ENCODE measurements at regions of chr7 and their contacts with region 1.

Region 1: DNA sequence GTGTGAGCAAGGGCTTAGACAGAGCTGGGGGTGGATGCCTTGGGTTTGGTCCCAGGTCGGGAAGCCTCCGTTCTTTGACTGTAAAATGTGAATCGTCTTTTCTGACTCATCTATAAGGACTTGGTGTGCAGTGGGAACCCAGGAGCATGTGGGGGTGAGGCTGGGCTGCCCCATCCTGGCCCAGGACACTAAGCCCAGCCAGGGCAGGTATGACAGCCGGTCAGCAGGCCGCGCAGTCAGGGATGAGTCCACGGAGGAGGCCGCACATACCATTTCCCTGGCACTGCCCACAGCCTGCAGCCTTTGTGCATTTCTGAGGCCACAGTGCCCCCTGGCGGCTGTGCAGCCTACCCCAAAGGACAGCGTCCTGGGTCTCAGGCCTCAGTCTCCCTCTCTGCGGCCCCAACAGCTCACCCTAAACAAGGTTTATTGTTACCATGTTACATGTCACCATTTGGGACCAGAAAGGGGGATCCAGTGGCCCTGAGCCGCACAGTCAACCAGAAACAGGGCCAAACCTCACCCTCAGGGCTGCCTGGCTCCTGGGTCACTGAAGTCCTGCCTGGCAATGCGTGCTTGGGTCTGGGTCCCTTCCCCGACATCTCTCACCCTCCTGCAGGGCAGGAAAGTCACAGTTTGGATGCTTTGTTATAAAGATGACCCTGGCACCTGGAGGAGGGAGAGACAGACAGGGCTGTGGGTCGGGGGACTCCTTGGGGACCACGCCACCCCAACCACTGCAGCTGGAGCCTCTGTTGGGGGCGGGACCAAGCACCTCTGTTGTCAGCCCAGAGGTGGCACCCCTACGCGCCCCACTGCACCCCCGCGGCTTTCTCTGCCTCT is 14.4 kb upstream of the SH2B2 start:
- DNase-seq: peak; percentile 81 to 91
- ATAC-seq: peak; percentile 70 to 90
- H3K4me3 ChIP-seq: no peak overlapping the region
- H3K27ac ChIP-seq: peak overlapping the region; percentile 3 to 83; a peak in 4 of 6 replicates
- H3K4me1 ChIP-seq: peaks cover 29% of the 10 kb centered on the region
- CTCF ChIP-seq: peak; percentile 95
- EP300 ChIP-seq: no peak
- POLR2A ChIP-seq: no peak
- RAD21 ChIP-seq: peak; percentile 98

Region 2: DNA sequence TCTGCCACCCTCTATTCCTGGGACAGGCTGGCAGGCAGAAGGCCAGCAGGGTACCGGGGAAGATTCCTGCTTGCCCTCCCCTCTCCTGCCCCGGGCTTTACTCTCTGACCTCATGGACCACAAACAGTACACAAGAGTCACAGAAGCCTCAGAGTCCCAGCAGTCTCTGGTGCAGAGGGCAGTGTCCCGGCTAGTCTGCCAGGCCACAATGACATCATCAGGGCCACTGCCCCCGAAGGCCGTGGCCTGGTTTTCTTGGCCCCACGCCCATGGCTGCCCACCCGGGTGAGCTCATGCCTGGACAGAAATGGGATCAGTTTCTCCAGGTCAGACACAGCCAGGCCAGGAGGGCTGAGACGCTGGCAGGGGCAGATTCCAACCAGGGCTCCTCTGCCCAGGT is 735.1 kb before region 1 on chr7:
- CTCF ChIA-PET with region 1: interaction called, 106 read pairs
- POLR2A ChIA-PET with region 1: no interaction called
- DNase-seq: no peak
- ATAC-seq: no peak
- H3K4me3 ChIP-seq: no peak overlapping the region
- H3K27ac ChIP-seq: no peak overlapping the region
- H3K4me1 ChIP-seq: no peaks in the 10 kb centered on the region
- CTCF ChIP-seq: no peak
- EP300 ChIP-seq: no peak
- POLR2A ChIP-seq: no peak
- RAD21 ChIP-seq: no peak

Region 3: DNA sequence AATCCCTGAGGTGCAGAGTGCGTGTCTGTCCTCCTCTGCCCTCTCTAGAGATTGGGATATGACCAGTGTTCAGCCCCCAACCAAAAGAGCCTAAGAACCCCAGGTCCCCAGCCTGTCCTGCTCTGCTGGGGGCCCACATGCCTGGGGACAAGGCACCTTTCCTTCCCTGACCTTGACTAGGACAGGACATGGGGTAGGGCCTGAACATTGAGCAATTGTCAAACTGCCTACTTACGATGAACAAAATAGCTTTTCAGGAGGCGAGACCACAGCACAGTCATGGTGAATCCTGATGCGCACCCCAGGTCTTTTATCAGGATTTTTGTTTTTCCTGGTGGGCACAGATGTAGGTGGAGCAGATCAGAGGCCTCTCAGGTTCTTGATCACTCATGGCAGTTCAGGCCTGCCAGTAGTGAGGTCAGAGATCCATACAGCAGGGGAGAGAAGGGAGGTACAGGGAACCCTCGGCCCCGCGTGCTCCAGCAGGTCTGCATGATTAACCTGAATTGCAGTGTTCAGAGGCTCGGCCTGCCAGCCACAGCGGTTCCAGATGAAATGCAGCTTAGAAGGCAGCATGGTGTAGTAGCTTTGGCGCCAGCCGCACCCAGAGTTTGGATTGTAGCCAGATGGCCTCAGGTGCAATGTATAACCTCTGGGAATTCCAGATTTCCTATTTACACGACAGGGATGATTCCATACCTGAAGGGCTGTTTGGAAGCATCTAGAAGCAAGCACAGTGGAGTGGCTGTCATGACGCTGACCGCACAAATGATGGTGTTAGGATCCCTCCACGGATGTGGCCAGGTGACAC is 263.6 kb before region 1 on chr7:
- CTCF ChIA-PET with region 1: no interaction called
- POLR2A ChIA-PET with region 1: no interaction called
- DNase-seq: no peak
- ATAC-seq: no peak; a peak in 1 of 6 replicates
- H3K4me3 ChIP-seq: no peak overlapping the region
- H3K27ac ChIP-seq: peak overlapping the region; percentile 28 to 65; a peak in 5 of 6 replicates
- H3K4me1 ChIP-seq: peaks cover 42% of the 10 kb centered on the region
- CTCF ChIP-seq: no peak
- EP300 ChIP-seq: no peak
- POLR2A ChIP-seq: no peak
- RAD21 ChIP-seq: no peak

Region 4: GRCh38 chr7:102248456-102249395 is 23.6 kb before region 1 on chr7:
- CTCF ChIA-PET with region 1: interaction called, 47 read pairs
- POLR2A ChIA-PET with region 1: no interaction called
- DNase-seq: no peak
- ATAC-seq: 0 out of 6 replicates have a peak, but pooled peaks of 1 of the 2 experiments have one; percentile 27
- H3K4me3 ChIP-seq: no peak overlapping the region
- H3K27ac ChIP-seq: no peak overlapping the region
- H3K4me1 ChIP-seq: no peaks in the 10 kb centered on the region
- CTCF ChIP-seq: no peak
- EP300 ChIP-seq: no peak
- POLR2A ChIP-seq: no peak
- RAD21 ChIP-seq: no peak

Region 5: GRCh38 chr7:102260856-102261255 is 11.4 kb before region 1 on chr7:
- CTCF ChIA-PET with region 1: interaction called, 47 read pairs
- POLR2A ChIA-PET with region 1: no interaction called
- DNase-seq: no peak
- ATAC-seq: peak; percentile 44 to 45; a peak in 3 of 6 replicates
- H3K4me3 ChIP-seq: no peak overlapping the region
- H3K27ac ChIP-seq: no peak overlapping the region
- H3K4me1 ChIP-seq: no peaks in the 10 kb centered on the region
- CTCF ChIP-seq: no peak
- EP300 ChIP-seq: no peak
- POLR2A ChIP-seq: no peak
- RAD21 ChIP-seq: no peak

Region 6: GRCh38 chr7:102287111-102287980 is 15.1 kb after region 1 on chr7:
- CTCF ChIA-PET with region 1: interaction called, 12 read pairs
- POLR2A ChIA-PET with region 1: interaction called, 3 read pairs
- DNase-seq: peak in 1 of 2 experiments; percentile 31
- ATAC-seq: peak; percentile 55 to 80
- H3K4me3 ChIP-seq: peak overlapping the region; percentile 76
- H3K27ac ChIP-seq: peak overlapping the region; percentile 67 to 93
- H3K4me1 ChIP-seq: peaks cover 18% of the 10 kb centered on the region
- CTCF ChIP-seq: no peak
- EP300 ChIP-seq: no peak
- POLR2A ChIP-seq: no peak
- RAD21 ChIP-seq: no peak

Region 7: DNA sequence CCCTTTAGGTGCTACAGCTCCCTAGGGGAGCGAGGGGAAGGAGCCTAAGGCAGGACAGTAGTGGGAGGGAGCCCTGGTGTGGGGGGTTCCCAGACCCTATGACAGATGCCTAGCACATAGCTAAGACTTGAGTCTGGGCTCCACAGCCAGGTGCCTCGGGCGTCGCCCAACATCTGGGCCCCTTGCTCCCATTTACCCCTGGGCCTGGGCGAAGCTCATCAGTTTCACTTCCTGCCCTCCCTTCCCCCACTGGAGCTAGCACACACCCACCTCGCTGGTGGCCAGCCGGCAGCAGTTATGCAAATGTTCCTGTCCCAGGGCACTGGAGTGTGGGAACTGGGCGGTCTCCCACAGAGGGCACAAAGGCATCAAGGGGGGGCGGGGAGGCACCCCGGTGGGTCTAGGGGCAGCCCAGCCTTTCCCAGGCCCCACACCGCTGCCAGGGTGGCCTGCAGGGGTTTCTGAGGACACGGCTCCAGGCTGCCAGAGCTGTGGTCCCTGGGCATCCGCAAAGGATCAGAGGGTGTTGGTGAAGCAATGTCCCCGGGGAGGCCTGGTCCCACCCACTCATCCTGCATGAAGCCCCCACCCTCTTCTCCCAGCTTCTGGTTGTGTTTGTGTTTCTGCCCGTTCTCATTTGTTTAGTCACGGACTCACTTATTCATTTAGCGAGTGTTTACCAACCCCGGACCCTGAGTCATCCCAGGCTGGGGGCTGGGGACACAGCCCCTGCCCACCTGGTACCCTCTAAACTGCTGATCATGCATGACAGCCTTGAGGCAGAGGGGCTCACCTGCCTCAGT is 34.8 kb after region 1 on chr7:
- CTCF ChIA-PET with region 1: no interaction called
- POLR2A ChIA-PET with region 1: no interaction called
- DNase-seq: peak in 1 of 2 experiments; percentile 59
- ATAC-seq: peak; percentile 36 to 64; a peak in 5 of 6 replicates
- H3K4me3 ChIP-seq: no peak overlapping the region
- H3K27ac ChIP-seq: peak overlapping the region; percentile 13 to 73; a peak in 4 of 6 replicates
- H3K4me1 ChIP-seq: peaks cover 9% of the 10 kb centered on the region
- CTCF ChIP-seq: no peak
- EP300 ChIP-seq: no peak
- POLR2A ChIP-seq: no peak
- RAD21 ChIP-seq: no peak